ENCODE measurements at regions of chr16 and their contacts with region 1.

Region 1: GRCh38 chr16:85746008-85746781 is 4.7 kb downstream of the C16orf74 start:
- DNase-seq: no peak
- H3K4me3 ChIP-seq: no peak overlapping the region
- H3K27ac ChIP-seq: peak overlapping the region in 1 of 2 donors; percentile 61
- H3K4me1 ChIP-seq: peaks cover 5 to 12% of the 10 kb centered on the region in 2 donors
- H3K27me3 ChIP-seq: no peaks in the 10 kb centered on the region
- CTCF ChIP-seq: no peak
- POLR2A ChIP-seq: no peak

Region 2: GRCh38 chr16:85659805-85660495 is 86.2 kb before region 1 on chr16:
- intact Hi-C with region 1: loop called (anchors 10 kb)
- DNase-seq: peak; percentile 70 to 88
- H3K4me3 ChIP-seq: no peak overlapping the region
- H3K27ac ChIP-seq: peak overlapping the region; percentile 12 to 57
- H3K4me1 ChIP-seq: peaks cover 0 to 3% of the 10 kb centered on the region in 2 donors
- H3K27me3 ChIP-seq: no peaks in the 10 kb centered on the region
- CTCF ChIP-seq: peak; percentile 46 to 96 (median 87)
- POLR2A ChIP-seq: no peak

Region 3: DNA sequence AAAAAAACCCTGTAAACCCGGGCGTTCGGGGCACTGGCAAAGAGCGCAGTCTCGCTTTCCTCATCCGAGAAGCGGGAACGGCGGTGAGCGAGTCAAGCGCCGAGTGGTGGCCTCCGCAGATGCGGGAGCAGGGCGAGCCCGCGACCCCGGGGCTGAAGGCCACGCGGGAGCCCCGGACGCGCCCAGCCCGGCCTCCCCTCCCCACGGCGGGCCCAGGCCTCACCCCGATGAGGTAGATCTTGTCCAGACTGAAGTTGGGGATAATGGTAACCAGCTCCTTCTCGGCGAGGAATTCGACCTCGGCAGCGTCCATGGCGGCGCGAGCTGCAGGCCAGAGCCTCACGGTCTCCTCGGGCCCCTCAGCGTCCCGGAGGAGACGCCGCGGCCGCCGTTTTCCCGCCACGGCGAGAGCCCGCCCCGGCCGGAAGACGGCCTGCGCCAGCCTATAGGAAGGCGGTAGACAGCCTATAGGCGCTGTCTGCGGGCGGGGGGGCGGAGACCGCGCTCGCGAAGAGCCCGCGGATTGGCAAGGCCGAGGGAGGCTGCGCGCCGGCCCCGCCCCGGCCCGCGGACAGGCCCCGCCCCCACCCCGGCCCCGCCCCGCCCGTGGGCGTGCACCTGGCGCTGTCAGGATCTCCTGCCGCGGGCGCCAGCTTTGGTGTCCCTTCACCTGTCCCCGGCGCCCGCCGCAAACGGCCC is 57.5 kb before region 1 on chr16 and contains the start of gene GINS2:
- intact Hi-C with region 1: no loop called
- DNase-seq: peak; percentile 87 to 89
- H3K4me3 ChIP-seq: peak within 1 kb of the TSS; percentile 55 to 76 (median 67)
- H3K27ac ChIP-seq: no peak within 1 kb of the TSS
- H3K4me1 ChIP-seq: peaks cover 0 to 4% of the 10 kb centered on the region in 2 donors
- H3K27me3 ChIP-seq: no peaks in the 10 kb centered on the region
- CTCF ChIP-seq: no peak
- POLR2A ChIP-seq: no peak
- total RNA-seq, gene GINS2: 0.66 to 3.1 (median 1.1) TPM

Measured in breast epithelium (tissue), 4 donors.